Heart right ventricle (tissue), 16 donors: ENCODE measurements at regions of chr5 and their contacts with region 1.

Region 1: GRCh38 chr5:151063142-151063949 is 17.5 kb downstream of the TNIP1 start:
- DNase-seq: peak in 1 of 2 donors; percentile 60
- ATAC-seq: peak; percentile 53 to 81 (median 74)
- H3K4me3 ChIP-seq: peak overlapping the region in 1 of 10 donors; percentile 3
- H3K27ac ChIP-seq: peak overlapping the region; percentile 78 to 93 (median 88)
- H3K4me1 ChIP-seq: peaks cover 44 to 98% (median 94%) of the 10 kb centered on the region in 9 donors
- H3K27me3 ChIP-seq: no peaks in the 10 kb centered on the region
- CTCF ChIP-seq: no peak

Region 2: DNA sequence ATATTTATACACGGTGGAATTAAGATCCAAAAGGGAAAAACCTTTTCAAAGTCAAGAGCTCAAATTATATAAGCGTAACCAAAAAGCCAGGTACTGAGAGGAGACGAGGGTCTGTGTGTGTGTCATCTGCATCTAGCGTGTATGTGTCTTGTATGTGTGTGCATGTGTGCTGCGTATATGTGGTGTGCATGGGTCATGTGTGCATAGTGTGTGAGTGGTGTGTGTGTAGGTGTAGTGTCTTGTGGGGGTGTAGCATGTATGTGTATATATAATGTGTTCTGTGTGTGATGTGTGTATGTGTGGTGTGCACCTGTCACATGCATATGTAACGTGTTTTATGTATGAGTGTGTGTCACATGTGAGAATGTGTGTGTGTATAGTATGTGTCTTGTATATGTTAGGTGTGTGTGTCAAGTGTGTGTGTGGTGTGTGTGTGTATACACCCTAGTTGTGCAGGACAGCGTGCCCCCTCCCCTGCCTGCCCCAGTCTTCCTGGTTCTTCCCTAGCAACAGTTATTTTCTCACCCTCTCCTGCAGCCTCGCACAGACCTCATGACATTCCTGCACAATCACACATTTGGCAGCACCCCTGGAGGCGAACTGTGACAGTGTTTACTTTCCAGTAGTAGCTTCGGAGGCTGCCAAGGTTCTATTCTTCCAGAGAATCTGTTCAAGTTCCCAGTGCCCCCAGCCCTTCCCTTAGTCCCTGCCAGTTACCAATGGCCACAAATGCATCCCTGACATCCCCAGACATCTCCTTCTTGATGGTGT is 44.6 kb after region 1 on chr5:
- intact Hi-C with region 1: loop called in 1 of 10 experiments (anchors 5 kb)
- DNase-seq: peak in 1 of 2 donors; percentile 73
- ATAC-seq: peak; percentile 66 to 91 (median 80)
- H3K4me3 ChIP-seq: no peak overlapping the region
- H3K27ac ChIP-seq: peak overlapping the region; percentile 61 to 85 (median 74)
- H3K4me1 ChIP-seq: peaks cover 9 to 58% (median 33%) of the 10 kb centered on the region in 9 donors
- H3K27me3 ChIP-seq: no peaks in the 10 kb centered on the region
- CTCF ChIP-seq: peak in 4 of 9 donors; percentile 2 to 19 (median 14)